IMR-90 (cell line): ENCODE measurements at regions of chr14 and their contacts with region 1.

Region 1: DNA sequence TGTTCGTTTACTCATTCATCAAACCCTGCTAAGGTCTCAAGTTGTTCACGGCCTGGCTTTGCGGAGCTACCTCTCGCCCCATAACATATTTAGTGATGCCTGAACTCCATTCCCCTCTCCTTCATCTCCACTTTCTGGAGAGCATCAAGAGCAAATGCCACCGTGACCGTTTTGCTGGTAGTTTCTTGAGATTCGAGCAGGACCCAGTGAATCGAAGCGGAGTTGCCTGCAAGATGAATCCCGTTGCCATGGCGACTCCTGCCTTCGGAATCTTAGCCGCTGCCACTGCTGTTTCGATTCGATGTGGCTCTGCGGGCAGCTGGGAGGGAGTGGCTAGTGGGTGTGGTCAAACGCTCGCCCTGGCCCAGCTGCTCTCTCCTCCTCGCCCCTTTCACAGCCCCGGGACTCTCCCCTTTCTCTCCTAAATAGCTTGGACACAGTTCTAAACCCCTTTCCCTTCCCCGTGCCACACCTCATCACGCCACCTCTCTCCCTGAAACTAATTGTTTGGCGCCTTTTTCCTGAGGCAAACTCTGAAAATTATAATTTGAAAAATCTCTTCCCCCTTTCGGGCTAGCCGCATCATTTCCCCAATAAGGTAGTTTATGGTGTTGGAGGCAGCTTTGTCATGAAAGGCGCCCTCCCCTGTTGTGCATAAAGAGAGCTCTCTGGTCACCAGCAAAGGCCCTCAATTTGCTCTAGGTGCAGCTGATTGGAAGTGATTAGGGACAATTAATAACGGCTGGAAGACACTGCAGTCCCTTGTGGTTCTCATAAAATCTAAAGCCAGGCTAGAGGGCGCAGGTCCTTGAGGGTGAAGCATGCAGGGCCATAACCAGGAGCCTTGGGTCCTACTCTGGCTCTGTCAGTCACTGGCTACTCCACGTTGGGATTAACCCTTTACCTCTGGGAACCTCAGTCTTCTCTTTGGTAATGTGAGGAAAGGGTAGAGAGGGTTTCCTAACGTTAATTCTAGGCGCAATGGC is 1.6 kb downstream of the DAAM1 start:
- DNase-seq: peak; percentile 91
- ATAC-seq: peak; percentile 57
- H3K4me3 ChIP-seq: peak overlapping the region; percentile 93
- H3K27ac ChIP-seq: peak overlapping the region; percentile 71
- H3K4me1 ChIP-seq: peaks cover 4% of the 10 kb centered on the region
- H3K27me3 ChIP-seq: peaks cover 2% of the 10 kb centered on the region
- CTCF ChIP-seq: peak; percentile 18; the same call in 1 of the 2 replicates
- POLR2A ChIP-seq: 0 out of 2 replicates have a peak, but pooled peaks have one; percentile 38
- RAD21 ChIP-seq: peak; percentile 19

Region 2: GRCh38 chr14:58663494-58664415 is 526.3 kb before region 1 on chr14:
- CTCF ChIA-PET with region 1: no interaction called
- POLR2A ChIA-PET with region 1: no interaction called
- dilution Hi-C with region 1: no loop called
- in situ Hi-C with region 1: no loop called
- intact Hi-C with region 1: no loop called
- DNase-seq: peak; percentile 90
- ATAC-seq: peak; percentile 91
- H3K4me3 ChIP-seq: no peak overlapping the region
- H3K27ac ChIP-seq: no peak overlapping the region
- H3K4me1 ChIP-seq: peaks cover 6% of the 10 kb centered on the region; the same call in 1 of the 2 replicates
- H3K27me3 ChIP-seq: peaks cover 4% of the 10 kb centered on the region
- CTCF ChIP-seq: no peak
- POLR2A ChIP-seq: no peak
- RAD21 ChIP-seq: no peak

Region 3: DNA sequence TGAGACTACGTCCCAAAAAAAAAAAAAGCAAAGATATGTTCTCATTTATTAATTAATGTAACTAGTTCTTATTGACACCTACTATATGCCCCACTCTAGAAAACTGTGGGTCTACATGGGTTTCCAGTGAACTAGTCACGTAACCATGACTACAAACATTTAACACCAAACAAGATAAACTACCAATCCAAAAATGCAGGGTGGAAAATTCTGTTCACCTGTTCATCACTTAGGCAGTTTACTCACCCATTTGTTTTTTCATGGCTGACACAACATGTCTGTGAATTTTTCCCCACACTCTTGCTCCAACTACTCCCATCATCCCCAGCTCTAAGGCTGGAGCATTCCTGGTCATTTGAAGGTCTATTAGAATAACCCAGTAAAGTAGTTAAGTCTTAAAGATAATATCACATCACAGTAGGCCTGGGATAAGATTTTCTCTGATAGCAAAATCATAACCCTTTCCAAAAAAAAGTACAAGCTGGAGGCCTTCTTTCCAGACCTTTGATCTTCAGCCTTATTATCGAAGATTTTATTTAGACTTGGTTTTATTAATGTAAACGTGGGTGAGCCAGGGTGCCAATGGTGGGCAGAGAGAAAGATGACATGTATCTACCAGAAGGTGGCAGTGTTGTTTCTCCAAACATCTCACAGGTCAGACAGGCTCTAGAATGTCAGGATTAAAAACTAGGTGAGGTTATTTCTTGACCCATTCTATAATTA is 63.2 kb before region 1 on chr14:
- CTCF ChIA-PET with region 1: no interaction called
- POLR2A ChIA-PET with region 1: no interaction called
- dilution Hi-C with region 1: no loop called
- in situ Hi-C with region 1: no loop called
- intact Hi-C with region 1: loop called (anchors 2 kb)
- DNase-seq: peak; percentile 64
- ATAC-seq: peak; percentile 90
- H3K4me3 ChIP-seq: no peak overlapping the region
- H3K27ac ChIP-seq: no peak overlapping the region
- H3K4me1 ChIP-seq: no peaks in the 10 kb centered on the region; the same call in 1 of the 2 replicates
- H3K27me3 ChIP-seq: peaks cover 2% of the 10 kb centered on the region; the same call in 1 of the 2 replicates
- CTCF ChIP-seq: peak; percentile 81
- POLR2A ChIP-seq: no peak
- RAD21 ChIP-seq: peak; percentile 94

Region 4: GRCh38 chr14:59254146-59254941 is 64.3 kb after region 1 on chr14:
- CTCF ChIA-PET with region 1: no interaction called
- POLR2A ChIA-PET with region 1: no interaction called
- dilution Hi-C with region 1: no loop called
- in situ Hi-C with region 1: no loop called
- intact Hi-C with region 1: loop called (anchors 2 kb)
- DNase-seq: peak; percentile 95
- ATAC-seq: peak; percentile 87
- H3K4me3 ChIP-seq: no peak overlapping the region
- H3K27ac ChIP-seq: peak overlapping the region; percentile 70; the same call in 1 of the 2 replicates
- H3K4me1 ChIP-seq: peaks cover 17% of the 10 kb centered on the region
- H3K27me3 ChIP-seq: no peaks in the 10 kb centered on the region
- CTCF ChIP-seq: no peak
- POLR2A ChIP-seq: no peak
- RAD21 ChIP-seq: no peak

Region 5: DNA sequence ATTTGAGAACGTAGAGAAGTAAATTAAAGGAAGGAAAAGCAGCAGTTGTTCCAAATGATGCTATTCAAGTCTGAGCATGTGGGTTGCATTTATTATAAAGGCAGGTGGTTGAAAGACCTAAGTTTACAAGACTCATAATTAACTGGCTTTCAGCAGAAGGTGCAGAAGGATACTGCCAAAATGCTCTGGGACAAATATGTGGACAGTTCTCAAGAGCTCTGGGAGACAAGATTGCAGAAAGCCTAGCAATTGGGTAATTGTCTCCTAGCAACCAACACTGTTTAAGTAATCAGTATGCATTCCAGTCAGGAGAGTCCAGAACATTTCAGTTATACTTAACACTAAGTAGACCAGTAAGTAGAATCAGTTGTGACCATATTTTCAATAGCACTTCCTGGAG is 143.6 kb after region 1 on chr14:
- CTCF ChIA-PET with region 1: no interaction called
- POLR2A ChIA-PET with region 1: no interaction called
- dilution Hi-C with region 1: no loop called
- in situ Hi-C with region 1: no loop called
- intact Hi-C with region 1: loop called (anchors 5 kb)
- DNase-seq: peak; percentile 95
- ATAC-seq: peak; percentile 87
- H3K4me3 ChIP-seq: no peak overlapping the region
- H3K27ac ChIP-seq: no peak overlapping the region
- H3K4me1 ChIP-seq: peaks cover 9% of the 10 kb centered on the region
- H3K27me3 ChIP-seq: no peaks in the 10 kb centered on the region
- CTCF ChIP-seq: no peak
- POLR2A ChIP-seq: no peak
- RAD21 ChIP-seq: no peak